ENCODE measurements at regions of chr2 and their contacts with region 1.

Region 1: GRCh38 chr2:46296840-46297545 is at the start of gene EPAS1:
- DNase-seq: peak; percentile 48 to 88 (median 54)
- ATAC-seq: peak; percentile 92
- H3K4me3 ChIP-seq: peak within 1 kb of the TSS; percentile 74
- H3K4me3 Mint-ChIP-seq: peak within 1 kb of the TSS; percentile 84 to 95 (median 92)
- H3K27ac ChIP-seq: no peak within 1 kb of the TSS
- H3K27ac Mint-ChIP-seq: peak within 1 kb of the TSS in 7 of 9 donors; percentile 34 to 89 (median 69)
- H3K4me1 ChIP-seq: peaks cover 18 to 26% of the 10 kb centered on the region in 2 donors
- H3K4me1 Mint-ChIP-seq: peaks cover 14 to 33% (median 26%) of the 10 kb centered on the region in 7 donors
- H3K27me3 ChIP-seq: peaks cover 13 to 18% of the 10 kb centered on the region in 2 donors
- H3K27me3 Mint-ChIP-seq: peaks cover 18 to 89% (median 48%) of the 10 kb centered on the region in 5 donors
- total RNA-seq, gene EPAS1: 1.6 to 17.0 (median 6.4) TPM

Region 2: DNA sequence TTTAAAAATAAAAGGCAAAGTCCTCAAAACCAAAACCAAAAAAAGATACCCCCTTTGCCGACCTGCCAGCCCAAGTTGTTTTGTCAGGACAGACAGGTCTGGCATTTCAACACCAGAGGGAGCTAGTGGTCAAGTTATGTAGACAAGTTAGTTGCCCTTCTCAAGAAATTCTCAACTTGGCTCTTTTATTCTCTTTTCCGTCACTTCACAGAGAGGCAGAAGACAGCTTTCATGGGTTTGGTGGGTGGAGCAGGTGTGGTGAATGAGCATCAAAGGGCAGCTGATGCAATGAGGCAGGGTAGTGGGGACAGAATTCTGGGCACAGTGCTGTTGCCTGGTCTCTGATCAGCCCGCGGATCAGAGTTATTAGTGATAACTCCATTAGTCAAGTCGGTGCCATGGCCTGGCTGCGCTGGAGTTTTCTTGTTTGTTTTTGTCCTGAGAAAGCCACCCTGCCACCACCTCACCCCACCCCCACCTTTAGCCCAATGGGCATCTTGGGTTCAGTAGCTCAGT is 303.5 kb before region 1 on chr2:
- CTCF ChIA-PET with region 1: no interaction called
- POLR2A ChIA-PET with region 1: no interaction called
- intact Hi-C with region 1: loop called in 1 of 2 experiments (anchors 5 kb)
- DNase-seq: peak in 8 of 9 donors; percentile 46 to 75 (median 64)
- ATAC-seq: peak; percentile 75
- H3K4me3 ChIP-seq: no peak overlapping the region
- H3K4me3 Mint-ChIP-seq: no peak overlapping the region
- H3K27ac ChIP-seq: no peak overlapping the region
- H3K27ac Mint-ChIP-seq: peak overlapping the region in 1 of 9 donors; percentile 36
- H3K4me1 ChIP-seq: no peaks in the 10 kb centered on the region
- H3K4me1 Mint-ChIP-seq: peaks cover 0 to 10% (median 6%) of the 10 kb centered on the region in 7 donors
- H3K27me3 ChIP-seq: no peaks in the 10 kb centered on the region
- H3K27me3 Mint-ChIP-seq: peaks cover 0 to 3% (median 0%) of the 10 kb centered on the region in 5 donors

Region 3: DNA sequence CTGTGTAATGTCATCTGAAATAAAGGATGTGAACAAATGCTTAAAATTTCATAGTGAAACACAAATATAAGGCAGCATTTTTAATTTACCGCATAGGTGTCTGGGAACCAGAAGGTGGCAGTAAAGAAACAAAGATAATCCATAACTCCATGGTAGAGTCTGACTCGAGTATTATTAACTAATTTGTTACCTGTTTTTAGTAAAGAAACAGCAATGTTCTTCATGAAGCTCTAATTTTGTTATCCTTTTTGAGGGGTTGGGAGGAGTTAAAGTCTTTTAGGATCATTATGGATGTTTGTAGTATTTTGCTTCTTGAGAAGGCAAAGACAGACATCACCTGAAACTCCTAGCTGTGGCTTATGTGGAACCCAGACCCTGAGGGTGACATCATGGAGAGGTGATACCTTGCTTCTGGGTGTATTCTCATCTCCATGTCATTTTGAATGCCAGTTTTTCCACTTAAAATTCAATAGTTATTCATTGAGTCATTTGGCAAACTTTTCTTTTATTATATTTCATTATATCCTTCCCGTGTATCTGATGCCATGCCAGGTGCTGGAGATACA is 286.0 kb before region 1 on chr2:
- CTCF ChIA-PET with region 1: no interaction called
- POLR2A ChIA-PET with region 1: no interaction called
- intact Hi-C with region 1: loop called in 1 of 2 experiments (anchors 5 kb)
- DNase-seq: peak in 6 of 9 donors; percentile 10 to 38 (median 26)
- ATAC-seq: no peak
- H3K4me3 ChIP-seq: no peak overlapping the region
- H3K4me3 Mint-ChIP-seq: no peak overlapping the region
- H3K27ac ChIP-seq: no peak overlapping the region
- H3K27ac Mint-ChIP-seq: no peak overlapping the region
- H3K4me1 ChIP-seq: no peaks in the 10 kb centered on the region
- H3K4me1 Mint-ChIP-seq: peaks cover 0 to 16% (median 0%) of the 10 kb centered on the region in 7 donors
- H3K27me3 ChIP-seq: no peaks in the 10 kb centered on the region
- H3K27me3 Mint-ChIP-seq: no peaks in the 10 kb centered on the region

Region 4: GRCh38 chr2:46062637-46063412 is 234.2 kb before region 1 on chr2:
- CTCF ChIA-PET with region 1: interaction called, 16 read pairs
- POLR2A ChIA-PET with region 1: no interaction called
- intact Hi-C with region 1: loop called (anchors 1 kb)
- DNase-seq: peak; percentile 14 to 63 (median 50)
- ATAC-seq: peak; percentile 73
- H3K4me3 ChIP-seq: no peak overlapping the region
- H3K4me3 Mint-ChIP-seq: no peak overlapping the region
- H3K27ac ChIP-seq: no peak overlapping the region
- H3K27ac Mint-ChIP-seq: no peak overlapping the region
- H3K4me1 ChIP-seq: peaks cover 0 to 4% of the 10 kb centered on the region in 2 donors
- H3K4me1 Mint-ChIP-seq: peaks cover 0 to 18% (median 0%) of the 10 kb centered on the region in 7 donors
- H3K27me3 ChIP-seq: no peaks in the 10 kb centered on the region
- H3K27me3 Mint-ChIP-seq: peaks cover 0 to 2% (median 0%) of the 10 kb centered on the region in 5 donors

Region 5: GRCh38 chr2:46187112-46187618 is 109.8 kb before region 1 on chr2:
- CTCF ChIA-PET with region 1: no interaction called
- POLR2A ChIA-PET with region 1: no interaction called
- intact Hi-C with region 1: loop called in 1 of 2 experiments (anchors 2 kb)
- DNase-seq: peak in 6 of 9 donors; percentile 9 to 44 (median 32)
- ATAC-seq: peak; percentile 38
- H3K4me3 ChIP-seq: peak overlapping the region; percentile 25
- H3K4me3 Mint-ChIP-seq: peak overlapping the region in 9 of 10 donors; percentile 42 to 76 (median 70)
- H3K27ac ChIP-seq: peak overlapping the region; percentile 32
- H3K27ac Mint-ChIP-seq: peak overlapping the region; percentile 72 to 95 (median 84)
- H3K4me1 ChIP-seq: peaks cover 4 to 5% of the 10 kb centered on the region in 2 donors
- H3K4me1 Mint-ChIP-seq: peaks cover 4 to 19% (median 14%) of the 10 kb centered on the region in 7 donors
- H3K27me3 ChIP-seq: no peaks in the 10 kb centered on the region
- H3K27me3 Mint-ChIP-seq: peaks cover 0 to 3% (median 0%) of the 10 kb centered on the region in 5 donors

Region 6: GRCh38 chr2:46239847-46240181 is 57.2 kb before region 1 on chr2:
- CTCF ChIA-PET with region 1: no interaction called
- POLR2A ChIA-PET with region 1: no interaction called
- intact Hi-C with region 1: loop called (anchors 2 to 5 kb)
- DNase-seq: peak; percentile 15 to 67 (median 62)
- ATAC-seq: peak; percentile 92
- H3K4me3 ChIP-seq: no peak overlapping the region
- H3K4me3 Mint-ChIP-seq: peak overlapping the region in 7 of 10 donors; percentile 10 to 76 (median 49)
- H3K27ac ChIP-seq: peak overlapping the region; percentile 36
- H3K27ac Mint-ChIP-seq: peak overlapping the region; percentile 79 to 94 (median 88)
- H3K4me1 ChIP-seq: peaks cover 17 to 21% of the 10 kb centered on the region in 2 donors
- H3K4me1 Mint-ChIP-seq: peaks cover 16 to 52% (median 41%) of the 10 kb centered on the region in 7 donors
- H3K27me3 ChIP-seq: no peaks in the 10 kb centered on the region
- H3K27me3 Mint-ChIP-seq: peaks cover 0 to 2% (median 0%) of the 10 kb centered on the region in 5 donors

Region 7: GRCh38 chr2:46351750-46352138 is 54.8 kb after region 1 on chr2:
- CTCF ChIA-PET with region 1: no interaction called
- POLR2A ChIA-PET with region 1: no interaction called
- intact Hi-C with region 1: loop called (anchors 1 to 2 kb)
- DNase-seq: peak in 8 of 9 donors; percentile 54 to 85 (median 76)
- ATAC-seq: peak; percentile 80
- H3K4me3 ChIP-seq: peak overlapping the region; percentile 56
- H3K4me3 Mint-ChIP-seq: peak overlapping the region; percentile 72 to 93 (median 83)
- H3K27ac ChIP-seq: peak overlapping the region; percentile 46
- H3K27ac Mint-ChIP-seq: peak overlapping the region; percentile 81 to 97 (median 91)
- H3K4me1 ChIP-seq: peaks cover 29 to 70% of the 10 kb centered on the region in 2 donors
- H3K4me1 Mint-ChIP-seq: peaks cover 43 to 99% (median 91%) of the 10 kb centered on the region in 7 donors
- H3K27me3 ChIP-seq: no peaks in the 10 kb centered on the region
- H3K27me3 Mint-ChIP-seq: no peaks in the 10 kb centered on the region

Region 8: GRCh38 chr2:46493241-46493970 is 196.4 kb after region 1 on chr2:
- CTCF ChIA-PET with region 1: no interaction called
- POLR2A ChIA-PET with region 1: no interaction called
- intact Hi-C with region 1: no loop called
- DNase-seq: no peak
- ATAC-seq: peak; percentile 22
- H3K4me3 ChIP-seq: no peak overlapping the region
- H3K4me3 Mint-ChIP-seq: no peak overlapping the region
- H3K27ac ChIP-seq: no peak overlapping the region
- H3K27ac Mint-ChIP-seq: peak overlapping the region in 1 of 9 donors; percentile 48
- H3K4me1 ChIP-seq: no peaks in the 10 kb centered on the region
- H3K4me1 Mint-ChIP-seq: peaks cover 0 to 13% (median 10%) of the 10 kb centered on the region in 7 donors
- H3K27me3 ChIP-seq: no peaks in the 10 kb centered on the region
- H3K27me3 Mint-ChIP-seq: peaks cover 0 to 18% (median 0%) of the 10 kb centered on the region in 5 donors

Measured in naive thymus-derived CD4-positive, alpha-beta T cell (primary cell).